PC-3 (cell line): ENCODE measurements at regions of chr9 and their contacts with region 1.

Region 1: GRCh38 chr9:2158111-2158610 is 143.0 kb downstream of the SMARCA2 start:
- DNase-seq: peak; percentile 56
- ATAC-seq: peak; percentile 45
- H3K4me3 ChIP-seq: peak overlapping the region; percentile 78
- H3K27ac ChIP-seq: peak overlapping the region; percentile 77
- H3K4me1 ChIP-seq: peaks cover 22% of the 10 kb centered on the region
- H3K27me3 ChIP-seq: no peaks in the 10 kb centered on the region
- CTCF ChIP-seq: no peak

Region 2: GRCh38 chr9:2014696-2015580 is 143.2 kb before region 1 on chr9 and contains the start of gene SMARCA2:
- CTCF ChIA-PET with region 1: no interaction called
- POLR2A ChIA-PET with region 1: no interaction called
- intact Hi-C with region 1: loop called (anchors 10 kb)
- DNase-seq: peak; percentile 93
- ATAC-seq: peak; percentile 73
- H3K4me3 ChIP-seq: peak within 1 kb of the TSS; percentile 84
- H3K27ac ChIP-seq: peak within 1 kb of the TSS; percentile 34
- H3K4me1 ChIP-seq: peaks cover 16% of the 10 kb centered on the region
- H3K27me3 ChIP-seq: no peaks in the 10 kb centered on the region
- CTCF ChIP-seq: no peak
- total RNA-seq, gene SMARCA2: 27.9 and 36.4 TPM in 2 replicates

Region 3: DNA sequence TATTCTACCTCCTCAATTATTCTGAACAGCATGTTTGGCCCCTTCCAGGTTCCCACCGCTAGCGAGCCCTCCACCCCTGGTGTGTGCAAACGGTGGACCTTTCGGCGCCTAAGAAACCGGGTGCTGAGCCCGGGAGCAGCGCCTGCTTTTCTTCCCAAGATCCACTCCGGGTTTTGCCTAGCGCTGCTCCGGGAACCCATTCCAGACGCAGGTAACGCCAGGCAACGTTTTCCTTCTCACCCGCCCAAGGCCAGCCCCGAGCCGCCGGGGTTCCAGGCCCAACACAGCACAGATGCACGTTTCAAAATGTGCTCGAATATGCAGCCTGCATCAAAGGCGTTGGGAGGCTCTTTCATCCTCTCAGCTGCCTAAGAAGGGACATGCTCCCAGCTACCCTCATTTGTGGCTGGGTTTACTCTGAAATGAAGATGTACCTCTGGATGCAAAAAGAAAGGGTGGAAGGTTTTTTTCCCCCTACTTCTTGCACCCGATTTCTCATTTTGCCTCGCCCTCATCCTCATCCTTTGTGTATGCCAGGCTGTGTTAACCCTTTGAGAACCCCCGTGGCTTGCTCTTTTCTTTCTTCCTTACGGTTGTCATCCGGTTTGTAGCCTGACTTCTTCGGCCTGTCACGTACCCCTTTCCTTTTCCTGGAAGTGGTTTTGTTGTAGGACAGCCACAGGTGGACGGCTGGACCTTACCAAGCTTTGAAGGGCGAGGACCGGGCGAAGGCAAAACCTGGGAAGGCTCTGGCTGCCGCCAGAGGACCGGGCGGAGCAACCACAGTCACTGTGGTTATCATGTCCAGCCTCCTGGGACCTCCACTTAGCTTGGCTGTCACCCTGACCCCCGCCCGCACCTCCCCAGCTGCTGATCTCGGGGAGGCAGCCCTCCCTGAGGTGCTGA is 83.9 kb after region 1 on chr9:
- CTCF ChIA-PET with region 1: no interaction called
- POLR2A ChIA-PET with region 1: no interaction called
- intact Hi-C with region 1: loop called (anchors 5 kb)
- DNase-seq: peak; percentile 71
- ATAC-seq: peak; percentile 94
- H3K4me3 ChIP-seq: peak overlapping the region; percentile 61
- H3K27ac ChIP-seq: no peak overlapping the region
- H3K4me1 ChIP-seq: peaks cover 7% of the 10 kb centered on the region; the same call in 1 of the 2 replicates
- H3K27me3 ChIP-seq: no peaks in the 10 kb centered on the region
- CTCF ChIP-seq: no peak